Endothelial cell of umbilical vein (primary cell): ENCODE measurements at regions of chr5 and their contacts with region 1.

Region 1: GRCh38 chr5:40333459-40334244 is 346.1 kb upstream of the PTGER4 start:
- DNase-seq: peak; percentile 90
- H3K4me3 ChIP-seq: no peak overlapping the region
- H3K27ac ChIP-seq: peak overlapping the region; percentile 70
- H3K4me1 ChIP-seq: peaks cover 20% of the 10 kb centered on the region
- H3K27me3 ChIP-seq: no peaks in the 10 kb centered on the region
- CTCF ChIP-seq: no peak
- POLR2A ChIP-seq: peak; percentile 54

Region 2: DNA sequence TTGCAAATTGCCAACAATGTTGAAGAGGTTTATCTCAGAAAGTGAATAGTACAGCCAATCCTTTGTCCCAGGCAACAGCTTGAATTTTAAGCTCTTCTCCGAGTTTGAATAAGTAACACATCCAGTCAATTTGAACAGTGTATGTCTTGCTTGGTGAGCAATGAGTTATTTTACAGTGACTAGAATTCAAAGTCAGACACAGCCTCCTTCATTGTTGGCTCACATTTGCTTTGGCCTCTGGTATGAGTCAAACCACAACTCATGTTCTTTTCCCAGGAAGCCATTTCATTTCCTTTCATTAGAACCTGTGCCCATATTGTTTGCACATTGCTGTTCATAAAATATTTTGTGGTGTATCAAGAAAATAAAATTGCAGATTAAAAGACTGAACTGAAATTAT is 286.9 kb before region 1 on chr5:
- CTCF ChIA-PET with region 1: no interaction called
- POLR2A ChIA-PET with region 1: no interaction called
- dilution Hi-C with region 1: no loop called
- intact Hi-C with region 1: loop called (anchors 2 kb)
- DNase-seq: peak; percentile 89
- H3K4me3 ChIP-seq: no peak overlapping the region
- H3K27ac ChIP-seq: peak overlapping the region; percentile 57
- H3K4me1 ChIP-seq: peaks cover 34% of the 10 kb centered on the region
- H3K27me3 ChIP-seq: no peaks in the 10 kb centered on the region
- CTCF ChIP-seq: no peak
- POLR2A ChIP-seq: no peak

Region 3: GRCh38 chr5:40171971-40172370 is 161.7 kb before region 1 on chr5:
- CTCF ChIA-PET with region 1: no interaction called
- POLR2A ChIA-PET with region 1: no interaction called
- dilution Hi-C with region 1: no loop called
- intact Hi-C with region 1: loop called (anchors 1 kb)
- DNase-seq: peak; percentile 82
- H3K4me3 ChIP-seq: no peak overlapping the region
- H3K27ac ChIP-seq: no peak overlapping the region
- H3K4me1 ChIP-seq: peaks cover 17% of the 10 kb centered on the region
- H3K27me3 ChIP-seq: no peaks in the 10 kb centered on the region
- CTCF ChIP-seq: no peak
- POLR2A ChIP-seq: no peak

Region 4: GRCh38 chr5:40383749-40384651 is 50.3 kb after region 1 on chr5:
- CTCF ChIA-PET with region 1: interaction called, 3 read pairs
- POLR2A ChIA-PET with region 1: no interaction called
- dilution Hi-C with region 1: no loop called
- intact Hi-C with region 1: loop called (anchors 2 kb)
- DNase-seq: peak; percentile 15
- H3K4me3 ChIP-seq: no peak overlapping the region
- H3K27ac ChIP-seq: no peak overlapping the region
- H3K4me1 ChIP-seq: peaks cover 11% of the 10 kb centered on the region
- H3K27me3 ChIP-seq: no peaks in the 10 kb centered on the region
- CTCF ChIP-seq: no peak
- POLR2A ChIP-seq: no peak

Region 5: GRCh38 chr5:40464511-40464910 is 130.9 kb after region 1 on chr5:
- CTCF ChIA-PET with region 1: interaction called, 3 read pairs
- POLR2A ChIA-PET with region 1: no interaction called
- dilution Hi-C with region 1: no loop called
- intact Hi-C with region 1: loop called (anchors 5 kb)
- DNase-seq: peak; percentile 59
- H3K4me3 ChIP-seq: no peak overlapping the region
- H3K27ac ChIP-seq: no peak overlapping the region
- H3K4me1 ChIP-seq: peaks cover 21% of the 10 kb centered on the region
- H3K27me3 ChIP-seq: no peaks in the 10 kb centered on the region
- CTCF ChIP-seq: no peak
- POLR2A ChIP-seq: no peak

Region 6: GRCh38 chr5:40688127-40688761 is 354.6 kb after region 1 on chr5:
- CTCF ChIA-PET with region 1: no interaction called
- POLR2A ChIA-PET with region 1: interaction called, 7 read pairs
- dilution Hi-C with region 1: no loop called
- intact Hi-C with region 1: loop called (anchors 1 kb)
- DNase-seq: peak; percentile 94
- H3K4me3 ChIP-seq: peak overlapping the region in 1 of 3 experiments; percentile 14
- H3K27ac ChIP-seq: peak overlapping the region; percentile 83
- H3K4me1 ChIP-seq: peaks cover 64% of the 10 kb centered on the region
- H3K27me3 ChIP-seq: no peaks in the 10 kb centered on the region
- CTCF ChIP-seq: peak; percentile 68 to 78
- POLR2A ChIP-seq: no peak